WTC11 (cell line): ENCODE measurements at regions of chr5 and their contacts with region 1.

Region 1: GRCh38 chr5:136192526-136193321 is at the start of gene SMIM32:
- DNase-seq: peak; percentile 59
- ATAC-seq: peak; percentile 47
- H3K4me3 Mint-ChIP-seq: peak within 1 kb of the TSS; percentile 71
- H3K27ac Mint-ChIP-seq: no peak within 1 kb of the TSS
- H3K4me1 Mint-ChIP-seq: peaks cover 14% of the 10 kb centered on the region
- H3K27me3 Mint-ChIP-seq: peaks cover 89% of the 10 kb centered on the region
- CTCF ChIP-seq: no peak
- total RNA-seq, gene SMIM32: 0.18 to 0.37 TPM in 2 of 3 replicates, not detected in the other

Region 2: DNA sequence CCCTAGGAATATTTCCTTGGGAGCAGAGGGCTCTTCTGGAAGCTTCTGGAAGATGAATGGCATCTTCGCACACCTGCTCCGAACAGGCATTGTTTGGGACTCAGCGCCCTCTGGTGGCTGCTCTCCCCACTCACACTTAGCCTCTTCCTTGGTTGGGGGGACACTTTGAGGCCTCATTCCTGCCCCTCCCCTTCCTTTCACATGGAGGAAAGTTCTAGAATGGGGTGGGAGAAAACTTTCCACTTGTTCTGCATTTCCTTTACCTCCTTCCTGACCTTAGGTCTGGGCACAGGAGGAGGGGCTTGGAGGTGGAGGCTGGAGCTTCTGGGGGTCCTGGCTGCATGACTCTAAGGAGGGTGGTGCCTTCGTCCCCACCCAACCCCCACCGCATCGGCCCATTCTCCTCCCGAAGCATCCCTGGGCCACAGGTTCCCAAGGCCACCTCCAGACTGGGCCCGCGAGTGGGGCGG is 19.6 kb after region 1 on chr5:
- CTCF ChIA-PET with region 1: interaction called, 55 read pairs
- POLR2A ChIA-PET with region 1: no interaction called
- DNase-seq: peak; percentile 77
- ATAC-seq: peak; percentile 75
- H3K4me3 Mint-ChIP-seq: no peak overlapping the region
- H3K27ac Mint-ChIP-seq: no peak overlapping the region
- H3K4me1 Mint-ChIP-seq: peaks cover 4% of the 10 kb centered on the region
- H3K27me3 Mint-ChIP-seq: peaks cover 57% of the 10 kb centered on the region
- CTCF ChIP-seq: peak; percentile 94

Region 3: DNA sequence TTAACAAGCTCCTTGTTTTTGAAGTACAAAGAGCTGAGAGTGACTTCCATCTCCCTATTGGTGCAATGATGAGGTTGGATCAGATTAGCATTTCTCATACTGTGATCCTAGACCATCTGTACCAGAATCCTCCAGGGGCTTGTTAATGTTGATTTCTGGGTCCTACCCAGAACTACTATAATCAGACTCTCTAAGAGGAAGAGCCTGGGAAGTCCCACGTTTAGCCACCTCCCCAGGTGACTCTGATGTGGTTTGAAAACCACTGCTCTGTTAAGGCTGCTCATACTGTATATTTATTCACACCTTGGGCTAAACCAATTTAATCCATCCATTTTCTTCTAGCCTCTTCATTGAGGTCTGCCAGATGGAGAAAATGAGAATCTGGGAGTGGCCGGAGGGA is 49.9 kb after region 1 on chr5:
- CTCF ChIA-PET with region 1: no interaction called
- POLR2A ChIA-PET with region 1: no interaction called
- DNase-seq: no peak
- ATAC-seq: no peak
- H3K4me3 Mint-ChIP-seq: no peak overlapping the region
- H3K27ac Mint-ChIP-seq: no peak overlapping the region
- H3K4me1 Mint-ChIP-seq: no peaks in the 10 kb centered on the region
- H3K27me3 Mint-ChIP-seq: no peaks in the 10 kb centered on the region; the same call in 1 of the 2 replicates
- CTCF ChIP-seq: no peak